A549 (cell line): ENCODE measurements at regions of chr12 and their contacts with region 1.

Region 1: DNA sequence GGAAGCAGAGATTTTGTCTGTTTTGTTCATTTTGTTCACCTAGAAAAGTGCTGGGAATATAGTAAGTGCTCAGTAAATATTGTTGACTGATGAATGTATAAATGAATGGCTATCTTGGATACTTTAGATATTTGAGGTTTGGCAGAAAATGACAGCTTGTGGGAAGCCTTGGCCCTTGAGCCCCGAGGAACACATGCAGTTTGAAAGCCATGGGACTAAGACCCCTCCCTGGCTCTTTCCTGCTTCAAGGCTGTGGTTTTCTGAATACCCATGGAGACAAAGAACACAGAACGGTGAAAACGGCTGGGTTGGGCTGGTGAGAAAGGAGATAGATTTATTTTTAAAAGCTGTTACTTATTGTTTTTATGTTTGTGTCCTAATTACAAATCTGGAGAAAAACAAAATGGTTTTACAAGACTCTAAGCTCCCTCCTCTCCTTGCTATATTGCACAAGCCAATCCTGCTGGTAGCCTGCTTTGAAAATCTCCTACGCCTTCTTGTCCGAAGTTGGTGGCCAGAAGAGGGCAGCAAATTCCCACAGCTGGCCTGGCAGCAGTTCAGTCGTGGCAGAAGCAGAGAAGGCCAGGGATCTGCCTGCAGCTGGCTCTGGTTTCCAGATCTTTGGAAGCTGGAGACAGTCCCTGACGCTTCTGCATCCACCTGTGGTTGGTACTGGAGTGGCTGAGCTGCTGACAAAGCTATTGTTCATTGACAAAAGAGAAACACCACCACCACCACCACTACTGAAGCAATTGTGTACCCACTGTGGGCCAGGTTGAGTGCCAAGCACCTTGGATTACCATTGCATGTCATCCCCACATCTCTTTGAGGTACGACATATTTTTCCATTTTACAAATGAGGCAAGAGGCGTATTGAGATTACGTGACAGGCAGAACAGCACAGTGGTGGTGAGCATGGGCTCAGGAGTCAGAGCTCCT is 5.2 kb upstream of the KRT85 start:
- DNase-seq: peak; percentile 93 to 95
- ATAC-seq: peak; percentile 95 to 97
- H3K4me3 ChIP-seq: no peak overlapping the region
- H3K27ac ChIP-seq: peak overlapping the region; percentile 34 to 67
- H3K4me1 ChIP-seq: peaks cover 10% of the 10 kb centered on the region; the same call in 1 of the 3 replicates
- CTCF ChIP-seq: peak; percentile 96
- EP300 ChIP-seq: no peak
- POLR2A ChIP-seq: no peak
- RAD21 ChIP-seq: peak; percentile 97 to 99

Region 2: GRCh38 chr12:52278541-52279421 is 93.7 kb before region 1 on chr12:
- CTCF ChIA-PET with region 1: interaction called, 19 read pairs
- POLR2A ChIA-PET with region 1: no interaction called
- DNase-seq: peak; percentile 87 to 92
- ATAC-seq: peak; percentile 31 to 49
- H3K4me3 ChIP-seq: peak overlapping the region; percentile 33; the same call in 2 of the 3 replicates
- H3K27ac ChIP-seq: peak overlapping the region; percentile 96 to 100
- H3K4me1 ChIP-seq: peaks cover 67% of the 10 kb centered on the region
- CTCF ChIP-seq: peak; percentile 96
- EP300 ChIP-seq: no peak
- POLR2A ChIP-seq: no peak
- RAD21 ChIP-seq: peak; percentile 85 to 89

Region 3: DNA sequence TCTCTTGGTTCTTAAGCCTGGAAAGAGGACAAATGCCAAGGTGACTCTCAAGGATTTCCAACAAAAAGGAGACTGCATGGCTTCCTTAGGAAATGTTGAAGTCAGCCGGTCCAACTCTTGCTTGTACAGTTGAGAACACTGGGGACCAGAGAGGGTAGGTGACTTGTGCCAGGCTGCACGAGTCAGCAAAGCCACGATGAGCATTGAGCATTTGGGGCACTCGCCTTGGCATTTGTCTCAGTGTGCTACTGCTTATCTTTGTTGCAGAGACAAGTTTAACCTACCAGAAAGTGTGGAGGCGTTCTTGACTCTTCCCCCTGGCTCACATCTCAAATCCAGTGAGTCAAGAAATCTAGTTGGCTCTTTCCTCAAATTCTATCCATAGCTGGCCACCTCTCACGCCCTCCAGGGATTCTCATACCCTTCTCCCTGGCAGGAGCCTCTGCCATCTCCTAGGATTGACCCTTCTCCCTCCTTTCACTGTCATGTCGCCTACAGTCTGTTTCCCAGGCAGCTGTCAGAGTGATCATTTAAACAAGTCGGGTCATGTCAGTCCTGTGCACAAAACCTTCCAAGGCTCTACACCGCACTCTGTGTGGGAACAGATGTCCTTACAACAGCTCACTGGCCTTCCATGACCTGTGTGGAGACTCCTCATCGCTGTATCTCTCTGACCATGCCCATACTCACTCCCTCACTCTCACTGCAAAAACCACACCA is 34.1 kb before region 1 on chr12:
- CTCF ChIA-PET with region 1: interaction called, 11 read pairs
- POLR2A ChIA-PET with region 1: no interaction called
- DNase-seq: no peak
- ATAC-seq: peak in 1 of 2 experiments; percentile 18; a peak in 2 of 6 replicates
- H3K4me3 ChIP-seq: no peak overlapping the region
- H3K27ac ChIP-seq: peak overlapping the region in 1 of 2 experiments; percentile 27; a peak in 3 of 6 replicates
- H3K4me1 ChIP-seq: peaks cover 21% of the 10 kb centered on the region
- CTCF ChIP-seq: no peak
- EP300 ChIP-seq: no peak
- POLR2A ChIP-seq: no peak
- RAD21 ChIP-seq: no peak

Region 4: DNA sequence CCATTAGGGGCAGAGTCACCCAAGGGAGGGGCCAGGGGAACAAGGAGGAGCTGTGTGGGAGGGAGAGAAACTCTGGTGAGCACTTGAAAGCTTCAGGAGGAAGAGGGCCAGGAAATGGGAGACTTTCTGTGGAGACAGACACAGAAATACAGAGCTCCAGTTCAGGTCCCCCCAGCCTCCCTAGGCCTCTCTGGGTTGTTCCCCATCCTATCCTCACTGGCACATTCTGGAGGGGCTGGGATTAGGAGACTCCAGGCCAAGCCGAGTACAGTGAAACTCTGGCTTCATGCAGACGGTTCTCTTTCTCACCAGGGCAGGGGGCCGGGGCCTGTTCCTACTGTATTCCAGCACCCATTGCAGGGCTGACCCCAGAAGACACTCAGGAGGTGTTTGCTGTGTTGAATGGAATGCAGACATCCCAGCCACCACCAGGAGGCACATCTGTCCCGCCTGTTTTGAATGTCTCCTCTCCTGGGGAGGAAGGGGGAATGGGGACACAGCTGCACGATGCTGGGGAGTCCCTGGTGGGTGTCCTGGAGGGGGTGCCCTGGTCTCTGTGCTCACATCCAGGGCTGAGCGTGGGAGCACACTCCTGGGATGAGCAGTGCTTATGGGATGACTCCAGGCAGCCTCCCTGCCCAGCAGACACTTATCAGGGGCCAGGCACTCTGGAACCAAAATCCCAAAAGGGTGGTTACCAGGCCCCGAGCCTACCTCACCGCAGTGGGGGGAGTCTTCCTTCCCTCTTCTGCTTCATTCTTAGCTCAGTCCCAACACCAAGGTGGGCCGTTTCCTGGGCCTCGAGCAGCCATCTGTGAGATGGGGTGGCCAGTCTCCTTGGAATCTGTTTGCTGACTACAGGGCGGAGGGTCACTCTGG is 18.5 kb after region 1 on chr12:
- CTCF ChIA-PET with region 1: interaction called, 24 read pairs
- POLR2A ChIA-PET with region 1: no interaction called
- DNase-seq: peak; percentile 58 to 62
- ATAC-seq: peak; percentile 69 to 87
- H3K4me3 ChIP-seq: no peak overlapping the region
- H3K27ac ChIP-seq: peak overlapping the region; percentile 33 to 72; a peak in 5 of 6 replicates
- H3K4me1 ChIP-seq: peaks cover 24% of the 10 kb centered on the region
- CTCF ChIP-seq: peak; percentile 61
- EP300 ChIP-seq: no peak
- POLR2A ChIP-seq: no peak
- RAD21 ChIP-seq: peak; percentile 78 to 80

Region 5: GRCh38 chr12:52506858-52507715 is 134.6 kb after region 1 on chr12:
- CTCF ChIA-PET with region 1: interaction called, 14 read pairs
- POLR2A ChIA-PET with region 1: no interaction called
- DNase-seq: peak; percentile 61 to 75
- ATAC-seq: peak; percentile 92 to 98; a peak in 5 of 6 replicates
- H3K4me3 ChIP-seq: no peak overlapping the region
- H3K27ac ChIP-seq: no peak overlapping the region
- H3K4me1 ChIP-seq: no peaks in the 10 kb centered on the region
- CTCF ChIP-seq: peak; percentile 65
- EP300 ChIP-seq: no peak
- POLR2A ChIP-seq: no peak
- RAD21 ChIP-seq: peak; percentile 56 to 65

Region 6: DNA sequence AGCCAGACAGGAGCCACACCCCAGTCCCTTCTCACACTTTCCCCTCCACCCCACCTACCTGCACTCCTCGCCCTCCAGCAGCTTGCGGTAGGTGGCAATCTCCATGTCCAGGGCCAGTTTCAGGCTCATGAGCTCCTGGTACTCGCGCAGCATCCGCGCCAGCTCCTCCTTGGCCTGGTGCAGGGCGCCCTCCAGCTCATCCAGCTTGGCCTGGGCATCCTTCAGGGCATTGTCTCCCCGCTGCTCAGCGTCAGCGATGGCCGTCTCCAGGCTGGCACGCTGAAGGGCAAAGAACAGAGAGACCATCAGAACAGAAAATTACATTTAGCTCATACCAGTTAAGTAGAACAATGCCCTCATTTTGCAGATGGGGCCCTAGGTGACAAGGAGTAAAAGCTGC is 195.6 kb after region 1 on chr12:
- CTCF ChIA-PET with region 1: interaction called, 11 read pairs
- POLR2A ChIA-PET with region 1: no interaction called
- DNase-seq: no peak
- ATAC-seq: no peak
- H3K4me3 ChIP-seq: no peak overlapping the region
- H3K27ac ChIP-seq: no peak overlapping the region
- H3K4me1 ChIP-seq: no peaks in the 10 kb centered on the region
- CTCF ChIP-seq: no peak
- EP300 ChIP-seq: no peak
- POLR2A ChIP-seq: no peak
- RAD21 ChIP-seq: no peak